Naive thymus-derived CD4-positive, alpha-beta T cell (primary cell): ENCODE measurements at regions of chr15 and their contacts with region 1.

Region 1: DNA sequence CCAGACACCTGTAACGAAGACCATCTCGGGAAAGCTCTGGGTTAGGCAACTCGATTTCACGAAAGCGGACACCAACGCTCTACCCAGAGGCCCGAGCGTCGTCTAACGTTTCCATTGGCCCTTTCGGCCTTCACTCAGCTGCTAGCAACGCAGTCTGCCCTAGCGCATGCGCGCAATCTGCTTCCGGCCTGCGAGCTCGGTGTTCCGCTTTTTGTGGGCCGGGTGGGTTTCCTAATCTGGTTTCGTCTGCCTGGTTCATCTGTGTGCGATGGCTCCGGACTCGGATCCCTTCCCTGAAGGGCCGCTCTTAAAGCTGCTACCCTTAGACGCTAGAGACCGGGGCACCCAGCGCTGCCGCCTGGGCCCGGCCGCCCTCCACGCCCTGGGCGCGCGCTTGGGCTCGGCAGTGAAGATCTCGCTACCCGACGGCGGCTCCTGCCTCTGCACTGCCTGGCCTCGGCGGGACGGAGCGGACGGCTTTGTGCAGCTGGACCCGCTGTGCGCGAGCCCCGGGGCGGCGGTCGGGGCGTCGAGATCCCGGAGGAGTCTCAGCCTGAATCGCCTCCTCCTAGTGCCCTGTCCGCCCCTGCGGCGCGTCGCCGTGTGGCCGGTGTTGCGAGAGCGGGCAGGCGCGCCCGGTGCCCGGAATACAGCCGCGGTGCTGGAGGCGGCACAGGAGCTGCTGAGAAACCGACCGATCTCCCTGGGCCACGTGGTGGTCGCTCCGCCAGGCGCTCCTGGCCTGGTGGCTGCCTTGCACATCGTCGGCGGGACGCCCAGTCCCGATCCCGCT is 24.0 kb upstream of the GATM start:
- DNase-seq: peak; percentile 84 to 98 (median 96)
- ATAC-seq: peak; percentile 96
- H3K4me3 ChIP-seq: peak overlapping the region; percentile 86
- H3K4me3 Mint-ChIP-seq: peak overlapping the region; percentile 88 to 99 (median 96)
- H3K27ac ChIP-seq: peak overlapping the region; percentile 83
- H3K27ac Mint-ChIP-seq: peak overlapping the region; percentile 91 to 98 (median 95)
- H3K4me1 ChIP-seq: peaks cover 8 to 22% of the 10 kb centered on the region in 2 donors
- H3K4me1 Mint-ChIP-seq: peaks cover 18 to 40% (median 38%) of the 10 kb centered on the region in 7 donors
- H3K27me3 ChIP-seq: no peaks in the 10 kb centered on the region
- H3K27me3 Mint-ChIP-seq: peaks cover 0 to 14% (median 0%) of the 10 kb centered on the region in 5 donors

Region 2: DNA sequence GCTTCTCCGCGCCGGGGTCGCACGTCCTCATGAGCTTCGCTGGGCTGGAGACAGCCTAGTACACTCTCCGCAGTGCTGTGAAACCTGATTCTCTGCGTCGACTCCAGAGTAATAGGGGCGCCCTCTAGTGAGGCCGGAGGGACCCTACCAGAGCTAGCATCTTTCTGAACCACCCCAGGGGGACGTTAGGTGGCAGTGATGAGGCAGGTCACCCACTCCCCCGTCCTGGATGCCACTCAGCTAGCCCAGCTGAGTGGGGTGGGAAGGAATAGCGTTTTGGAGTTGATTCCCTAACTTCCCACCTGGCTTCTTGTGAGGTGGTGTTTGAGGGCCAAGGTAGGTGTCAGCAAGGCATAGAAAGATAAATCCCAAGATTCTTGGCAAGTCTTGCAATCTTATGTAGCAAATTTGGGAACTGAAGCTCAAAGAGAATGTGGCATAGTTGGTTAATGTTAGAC is 284.2 kb before region 1 on chr15:
- CTCF ChIA-PET with region 1: interaction called, 3 read pairs
- POLR2A ChIA-PET with region 1: no interaction called
- intact Hi-C with region 1: loop called in 1 of 2 experiments (anchors 2 kb)
- DNase-seq: peak; percentile 64 to 86 (median 81)
- ATAC-seq: peak; percentile 99
- H3K4me3 ChIP-seq: peak overlapping the region; percentile 34
- H3K4me3 Mint-ChIP-seq: peak overlapping the region; percentile 69 to 91 (median 82)
- H3K27ac ChIP-seq: no peak overlapping the region
- H3K27ac Mint-ChIP-seq: peak overlapping the region in 1 of 9 donors; percentile 47
- H3K4me1 ChIP-seq: peaks cover 0 to 35% of the 10 kb centered on the region in 2 donors
- H3K4me1 Mint-ChIP-seq: peaks cover 19 to 42% (median 33%) of the 10 kb centered on the region in 7 donors
- H3K27me3 ChIP-seq: peaks cover 4 to 27% of the 10 kb centered on the region in 2 donors
- H3K27me3 Mint-ChIP-seq: peaks cover 50 to 82% (median 65%) of the 10 kb centered on the region in 5 donors

Region 3: GRCh38 chr15:45205192-45205591 is 197.2 kb before region 1 on chr15:
- CTCF ChIA-PET with region 1: interaction called, 7 read pairs
- POLR2A ChIA-PET with region 1: interaction called, 19 read pairs
- intact Hi-C with region 1: loop called (anchors 1 kb)
- DNase-seq: peak in 8 of 9 donors; percentile 31 to 61 (median 46)
- ATAC-seq: peak; percentile 27
- H3K4me3 ChIP-seq: no peak overlapping the region
- H3K4me3 Mint-ChIP-seq: no peak overlapping the region
- H3K27ac ChIP-seq: no peak overlapping the region
- H3K27ac Mint-ChIP-seq: peak overlapping the region in 3 of 9 donors; percentile 12 to 28 (median 19)
- H3K4me1 ChIP-seq: peaks cover 5% of the 10 kb centered on the region in 2 donors
- H3K4me1 Mint-ChIP-seq: peaks cover 0 to 8% (median 4%) of the 10 kb centered on the region in 7 donors
- H3K27me3 ChIP-seq: no peaks in the 10 kb centered on the region
- H3K27me3 Mint-ChIP-seq: peaks cover 9 to 35% (median 10%) of the 10 kb centered on the region in 5 donors

Region 4: GRCh38 chr15:45378149-45378912 is 24.0 kb before region 1 on chr15 and contains the start of gene GATM:
- CTCF ChIA-PET with region 1: no interaction called
- POLR2A ChIA-PET with region 1: interaction called, 9 read pairs
- intact Hi-C with region 1: loop called (anchors 1 to 2 kb)
- DNase-seq: peak in 5 of 9 donors; percentile 13 to 49 (median 16)
- ATAC-seq: peak; percentile 79
- H3K4me3 ChIP-seq: peak within 1 kb of the TSS; percentile 62
- H3K4me3 Mint-ChIP-seq: peak within 1 kb of the TSS; percentile 76 to 88 (median 81)
- H3K27ac ChIP-seq: no peak within 1 kb of the TSS
- H3K27ac Mint-ChIP-seq: peak within 1 kb of the TSS in 2 of 9 donors; percentile 19 to 25
- H3K4me1 ChIP-seq: peaks cover 7 to 9% of the 10 kb centered on the region in 2 donors
- H3K4me1 Mint-ChIP-seq: peaks cover 3 to 23% (median 15%) of the 10 kb centered on the region in 7 donors
- H3K27me3 ChIP-seq: peaks cover 3 to 18% of the 10 kb centered on the region in 2 donors
- H3K27me3 Mint-ChIP-seq: peaks cover 46 to 92% (median 62%) of the 10 kb centered on the region in 5 donors
- total RNA-seq, gene GATM: 0.29 to 2.4 (median 1.6) TPM

Region 5: DNA sequence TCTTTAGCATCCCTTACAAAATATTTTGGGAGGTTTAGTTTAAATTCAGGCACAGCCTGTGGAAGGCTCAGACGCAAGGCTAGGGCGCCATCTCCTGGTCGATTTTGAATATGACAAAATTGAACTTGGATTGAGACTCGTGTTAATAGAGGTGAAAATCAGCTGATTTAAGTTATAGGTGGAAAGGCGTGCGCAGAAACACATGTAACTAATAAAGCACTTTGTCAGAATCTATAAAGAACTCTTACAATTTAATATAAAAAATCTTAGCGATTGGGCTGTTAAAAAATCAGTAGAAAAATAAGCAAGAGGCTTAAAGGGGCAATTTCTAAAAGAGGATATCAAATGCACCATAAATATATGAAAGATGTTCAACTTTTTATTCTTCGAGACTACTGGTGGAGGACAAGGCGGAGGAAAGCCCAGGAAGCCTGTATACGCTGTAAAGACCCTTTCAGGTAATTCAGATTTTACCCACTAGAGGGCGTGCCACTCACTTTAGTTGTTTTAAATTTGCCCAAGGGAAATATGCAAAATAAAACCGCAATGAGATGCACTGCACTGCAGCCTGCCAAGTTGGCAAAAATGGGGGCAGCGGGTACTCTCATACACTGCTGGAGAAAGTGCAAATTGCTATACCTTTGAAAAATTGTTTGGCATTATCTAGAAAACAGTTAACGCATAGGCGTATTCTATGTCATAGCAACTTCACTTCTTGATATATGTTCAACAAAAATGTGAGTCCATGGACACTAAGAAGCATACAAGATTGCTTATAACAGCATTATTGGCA is 55.5 kb after region 1 on chr15:
- CTCF ChIA-PET with region 1: interaction called, 3 read pairs
- POLR2A ChIA-PET with region 1: interaction called, 8 read pairs
- intact Hi-C with region 1: loop called (anchors 1 to 2 kb)
- DNase-seq: peak; percentile 33 to 85 (median 81)
- ATAC-seq: peak; percentile 77
- H3K4me3 ChIP-seq: peak overlapping the region; percentile 58
- H3K4me3 Mint-ChIP-seq: peak overlapping the region; percentile 80 to 95 (median 90)
- H3K27ac ChIP-seq: peak overlapping the region; percentile 68
- H3K27ac Mint-ChIP-seq: peak overlapping the region; percentile 74 to 92 (median 83)
- H3K4me1 ChIP-seq: peaks cover 16 to 33% of the 10 kb centered on the region in 2 donors
- H3K4me1 Mint-ChIP-seq: peaks cover 25 to 60% (median 40%) of the 10 kb centered on the region in 7 donors
- H3K27me3 ChIP-seq: no peaks in the 10 kb centered on the region
- H3K27me3 Mint-ChIP-seq: no peaks in the 10 kb centered on the region

Region 6: GRCh38 chr15:45634442-45635190 is 232.3 kb after region 1 on chr15 and contains the start of gene SQOR:
- CTCF ChIA-PET with region 1: no interaction called
- POLR2A ChIA-PET with region 1: interaction called, 6 read pairs
- intact Hi-C with region 1: loop called in 1 of 2 experiments (anchors 1 kb)
- DNase-seq: peak; percentile 46 to 78 (median 58)
- ATAC-seq: peak; percentile 72
- H3K4me3 ChIP-seq: peak within 1 kb of the TSS; percentile 84
- H3K4me3 Mint-ChIP-seq: peak within 1 kb of the TSS; percentile 91 to 98 (median 96)
- H3K27ac ChIP-seq: peak within 1 kb of the TSS; percentile 69
- H3K27ac Mint-ChIP-seq: peak within 1 kb of the TSS; percentile 84 to 96 (median 91)
- H3K4me1 ChIP-seq: peaks cover 24 to 27% of the 10 kb centered on the region in 2 donors
- H3K4me1 Mint-ChIP-seq: peaks cover 24 to 46% (median 42%) of the 10 kb centered on the region in 7 donors
- H3K27me3 ChIP-seq: no peaks in the 10 kb centered on the region
- H3K27me3 Mint-ChIP-seq: peaks cover 0 to 13% (median 0%) of the 10 kb centered on the region in 5 donors
- total RNA-seq, gene SQOR: 20.6 to 115 (median 32.6) TPM